HepG2 (cell line): ENCODE measurements at regions of chr3 and their contacts with region 1.

Region 1: DNA sequence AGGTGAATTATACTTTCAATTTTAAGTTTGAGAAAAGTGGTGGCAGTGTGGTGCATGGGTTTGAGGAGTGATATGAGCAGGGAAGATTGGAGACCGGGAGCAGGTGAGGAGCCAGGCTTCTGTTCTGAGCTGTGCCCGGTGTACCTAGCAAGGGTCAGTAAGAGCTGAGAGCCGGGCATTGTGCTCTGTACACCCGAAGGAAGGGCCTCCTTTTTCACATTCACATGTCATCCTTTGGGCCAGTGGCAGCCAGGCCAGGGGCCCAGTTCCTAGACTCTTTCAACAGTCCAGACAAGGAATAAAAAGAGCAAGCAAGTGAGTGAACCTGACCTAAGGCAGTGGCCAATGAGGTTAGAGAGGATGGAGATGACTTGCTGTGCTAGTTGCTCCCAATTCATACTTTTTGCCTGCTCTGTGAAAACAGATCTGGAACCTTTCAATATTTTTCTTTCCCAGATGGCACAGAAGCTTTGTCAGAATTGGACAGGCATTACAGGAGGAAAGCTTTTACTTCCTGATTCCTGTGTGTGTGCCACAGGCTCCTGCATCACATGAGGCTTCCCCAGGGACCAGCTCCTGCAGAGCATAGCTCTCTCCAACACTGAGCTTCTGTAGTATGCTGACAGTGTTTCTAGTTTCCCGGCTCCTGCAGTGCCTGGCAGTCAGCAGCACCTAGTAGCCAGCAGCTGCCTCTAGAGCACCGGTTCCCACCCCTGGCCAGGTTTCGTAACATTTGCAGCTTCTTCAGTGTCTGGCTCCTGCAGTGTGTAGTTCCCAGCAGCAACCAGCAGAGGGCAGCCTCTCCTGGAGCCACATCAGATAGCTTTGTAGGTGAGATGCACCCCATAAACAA is 5.3 kb upstream of the TRA2B start:
- DNase-seq: peak; percentile 88
- ATAC-seq: peak; percentile 97
- H3K4me3 ChIP-seq: peak overlapping the region; percentile 10 to 59 (median 36)
- H3K27ac ChIP-seq: peak overlapping the region; percentile 13
- H3K4me1 ChIP-seq: peaks cover 35% of the 10 kb centered on the region
- H3K27me3 ChIP-seq: no peaks in the 10 kb centered on the region
- CTCF ChIP-seq: peak; percentile 96
- EP300 ChIP-seq: 0 out of 4 replicates have a peak, but pooled peaks of 1 of the 2 experiments have one; percentile 11
- POLR2A ChIP-seq: no peak
- RAD21 ChIP-seq: peak; percentile 82

Region 2: DNA sequence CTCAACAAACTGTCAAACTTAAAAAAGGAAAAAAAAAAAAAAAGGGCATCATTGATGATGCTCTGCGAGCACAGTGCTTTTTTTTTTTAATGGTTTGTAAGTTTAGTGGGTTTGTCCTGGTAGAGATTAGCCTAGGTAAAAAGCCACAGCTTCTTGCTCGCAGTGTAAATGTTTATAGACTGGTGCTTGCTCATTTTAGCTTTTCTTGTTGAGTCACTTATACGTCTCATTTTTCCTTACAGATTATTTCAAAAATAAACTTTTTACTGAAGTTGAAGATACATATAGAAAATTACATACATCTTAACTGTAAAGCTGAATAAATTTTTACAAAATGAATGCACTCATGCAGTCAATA is 11.2 kb after region 1 on chr3:
- CTCF ChIA-PET with region 1: interaction called, 6 read pairs
- POLR2A ChIA-PET with region 1: interaction called, 52 read pairs
- in situ Hi-C with region 1: no loop called
- intact Hi-C with region 1: no loop called
- DNase-seq: peak; percentile 36
- ATAC-seq: no peak
- H3K4me3 ChIP-seq: peak overlapping the region in 1 of 3 experiments; percentile 22; a peak in 1 of 6 replicates
- H3K27ac ChIP-seq: peak overlapping the region; percentile 82
- H3K4me1 ChIP-seq: peaks cover 46% of the 10 kb centered on the region
- H3K27me3 ChIP-seq: no peaks in the 10 kb centered on the region
- CTCF ChIP-seq: no peak
- EP300 ChIP-seq: no peak
- POLR2A ChIP-seq: no peak
- RAD21 ChIP-seq: no peak

Region 3: DNA sequence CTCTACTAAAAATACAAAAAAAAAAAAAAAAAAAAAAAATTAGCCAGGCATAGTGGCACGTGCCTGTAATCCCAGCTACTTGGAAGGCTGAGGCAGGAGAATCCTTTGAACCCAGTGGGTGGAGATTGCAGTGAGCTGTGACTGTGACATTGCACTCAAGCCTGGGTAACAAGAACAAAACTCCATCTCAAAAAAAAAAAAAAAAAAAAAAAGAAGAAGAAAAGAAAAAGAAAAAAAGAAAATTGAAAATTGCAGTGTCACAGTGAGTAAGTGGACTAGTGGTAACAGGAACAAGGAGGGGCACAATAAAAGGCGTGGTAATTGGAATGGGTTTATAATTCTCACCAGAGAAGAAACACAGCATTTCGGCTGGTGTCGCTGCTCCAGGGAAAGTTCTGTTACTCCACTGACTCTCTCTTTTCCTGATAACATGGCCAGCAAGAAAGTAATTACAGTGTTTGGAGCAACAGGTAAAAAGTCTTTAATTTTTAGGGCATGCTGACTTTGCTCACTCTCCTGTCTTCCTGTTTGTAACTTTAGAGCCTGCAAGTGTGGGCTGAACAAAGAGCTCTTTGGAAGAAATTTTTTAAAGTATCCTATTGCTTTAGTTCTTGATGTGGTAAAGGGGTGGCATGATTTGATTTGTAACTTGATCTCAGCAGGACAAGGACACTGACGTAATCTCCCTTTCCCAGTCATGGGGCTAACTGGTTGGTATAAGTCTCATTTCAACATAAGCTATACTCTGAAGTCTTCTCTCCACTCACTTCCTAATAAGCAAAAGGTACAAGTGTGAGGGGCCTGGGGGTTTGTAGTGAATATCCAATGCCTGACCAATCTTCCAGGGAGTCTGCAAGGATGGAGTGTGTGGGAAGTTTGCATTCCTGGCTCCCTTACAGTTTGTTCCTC is 16.7 kb after region 1 on chr3:
- CTCF ChIA-PET with region 1: no interaction called
- POLR2A ChIA-PET with region 1: interaction called, 28 read pairs
- in situ Hi-C with region 1: no loop called
- intact Hi-C with region 1: no loop called
- DNase-seq: peak; percentile 88
- ATAC-seq: peak; percentile 74
- H3K4me3 ChIP-seq: peak overlapping the region; percentile 14 to 56 (median 53)
- H3K27ac ChIP-seq: peak overlapping the region; percentile 95
- H3K4me1 ChIP-seq: peaks cover 62% of the 10 kb centered on the region
- H3K27me3 ChIP-seq: no peaks in the 10 kb centered on the region
- CTCF ChIP-seq: no peak
- EP300 ChIP-seq: peak in 1 of 2 experiments; percentile 32; a peak in 1 of 4 replicates
- POLR2A ChIP-seq: peak in 1 of 2 experiments; percentile 62; a peak in 2 of 4 replicates
- RAD21 ChIP-seq: no peak

Region 4: DNA sequence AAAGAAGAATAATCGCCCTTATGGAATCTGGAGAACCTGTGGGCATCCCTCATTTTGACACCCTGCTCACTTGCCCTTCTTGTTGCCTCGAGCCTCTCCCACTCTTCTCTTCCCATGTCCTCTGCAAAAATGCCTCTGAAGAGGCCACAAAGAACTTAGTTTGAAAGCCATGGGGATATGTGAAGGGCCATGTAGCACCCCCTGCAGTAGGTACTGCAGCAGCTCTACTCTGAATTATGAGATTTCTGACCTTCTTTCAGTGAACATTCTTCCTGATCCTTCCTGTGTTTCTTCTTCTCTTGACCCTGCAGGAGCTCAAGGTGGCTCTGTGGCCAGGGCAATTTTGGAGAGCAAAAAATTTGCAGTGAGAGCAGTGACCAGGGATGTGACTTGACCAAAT is 25.0 kb after region 1 on chr3:
- CTCF ChIA-PET with region 1: interaction called, 8 read pairs
- POLR2A ChIA-PET with region 1: interaction called, 32 read pairs
- in situ Hi-C with region 1: no loop called
- intact Hi-C with region 1: loop called (anchors 2 kb)
- DNase-seq: no peak
- ATAC-seq: no peak
- H3K4me3 ChIP-seq: no peak overlapping the region
- H3K27ac ChIP-seq: peak overlapping the region; percentile 5
- H3K4me1 ChIP-seq: peaks cover 72% of the 10 kb centered on the region
- H3K27me3 ChIP-seq: no peaks in the 10 kb centered on the region
- CTCF ChIP-seq: peak; percentile 34; the same call in 1 of the 2 replicates
- EP300 ChIP-seq: no peak
- POLR2A ChIP-seq: no peak
- RAD21 ChIP-seq: peak; percentile 45; the same call in 1 of the 2 replicates